ENCODE measurements at regions of chr15 and their contacts with region 1.

Region 1: GRCh38 chr15:98518823-98519561 is 129.3 kb upstream of the IGF1R start:
- DNase-seq: no peak
- ATAC-seq: peak; percentile 49
- H3K4me3 Mint-ChIP-seq: no peak overlapping the region
- H3K27ac Mint-ChIP-seq: no peak overlapping the region
- H3K4me1 Mint-ChIP-seq: peaks cover 3% of the 10 kb centered on the region
- H3K27me3 Mint-ChIP-seq: peaks cover 4% of the 10 kb centered on the region
- CTCF ChIP-seq: peak; percentile 53

Region 2: GRCh38 chr15:97875513-97876280 is 643.3 kb before region 1 on chr15:
- CTCF ChIA-PET with region 1: no interaction called
- POLR2A ChIA-PET with region 1: no interaction called
- intact Hi-C with region 1: no loop called
- DNase-seq: no peak
- ATAC-seq: no peak
- H3K4me3 Mint-ChIP-seq: no peak overlapping the region
- H3K27ac Mint-ChIP-seq: no peak overlapping the region
- H3K4me1 Mint-ChIP-seq: no peaks in the 10 kb centered on the region
- H3K27me3 Mint-ChIP-seq: no peaks in the 10 kb centered on the region
- CTCF ChIP-seq: no peak

Region 3: GRCh38 chr15:98292442-98293240 is 226.4 kb before region 1 on chr15:
- CTCF ChIA-PET with region 1: no interaction called
- POLR2A ChIA-PET with region 1: no interaction called
- intact Hi-C with region 1: no loop called
- DNase-seq: no peak
- ATAC-seq: no peak
- H3K4me3 Mint-ChIP-seq: no peak overlapping the region
- H3K27ac Mint-ChIP-seq: no peak overlapping the region
- H3K4me1 Mint-ChIP-seq: no peaks in the 10 kb centered on the region
- H3K27me3 Mint-ChIP-seq: peaks cover 25% of the 10 kb centered on the region
- CTCF ChIP-seq: no peak

Region 4: GRCh38 chr15:98658831-98659699 is 140.1 kb after region 1 on chr15:
- CTCF ChIA-PET with region 1: interaction called, 85 read pairs
- POLR2A ChIA-PET with region 1: no interaction called
- intact Hi-C with region 1: loop called (anchors 1 kb)
- DNase-seq: no peak
- ATAC-seq: peak; percentile 75
- H3K4me3 Mint-ChIP-seq: no peak overlapping the region
- H3K27ac Mint-ChIP-seq: no peak overlapping the region
- H3K4me1 Mint-ChIP-seq: no peaks in the 10 kb centered on the region
- H3K27me3 Mint-ChIP-seq: peaks cover 9% of the 10 kb centered on the region
- CTCF ChIP-seq: peak; percentile 54

Region 5: GRCh38 chr15:98881526-98882520 is 362.8 kb after region 1 on chr15:
- CTCF ChIA-PET with region 1: interaction called, 20 read pairs
- POLR2A ChIA-PET with region 1: no interaction called
- intact Hi-C with region 1: no loop called
- DNase-seq: no peak
- ATAC-seq: peak; percentile 42
- H3K4me3 Mint-ChIP-seq: no peak overlapping the region
- H3K27ac Mint-ChIP-seq: no peak overlapping the region
- H3K4me1 Mint-ChIP-seq: peaks cover 8% of the 10 kb centered on the region
- H3K27me3 Mint-ChIP-seq: peaks cover 2% of the 10 kb centered on the region
- CTCF ChIP-seq: peak; percentile 34